CD8-positive, alpha-beta memory T cell (primary cell): ENCODE measurements at regions of chr17 and their contacts with region 1.

Region 1: DNA sequence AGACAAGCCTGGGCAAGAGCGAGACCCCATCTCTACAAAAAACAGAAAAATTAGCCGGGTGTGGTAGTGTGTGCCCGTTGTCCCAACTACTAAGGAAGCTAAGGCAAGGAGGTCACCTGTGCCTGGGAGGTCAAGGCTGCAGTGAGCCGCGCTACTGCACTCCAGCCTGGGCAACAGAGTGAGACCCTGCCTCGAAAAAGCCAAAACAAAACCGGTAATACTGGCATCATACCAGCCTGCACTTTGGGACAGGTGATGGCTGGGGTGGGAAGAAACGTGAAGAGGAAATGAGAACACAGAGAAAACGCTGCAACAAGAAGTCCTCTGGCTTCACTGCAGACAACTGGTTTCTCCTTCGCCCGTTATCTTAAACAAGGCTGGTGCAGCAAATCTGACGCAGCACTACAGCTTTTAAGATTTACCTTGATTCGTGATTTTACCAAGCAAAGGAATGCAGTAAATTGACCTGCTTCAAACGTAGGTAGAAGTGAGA is 725 bp upstream of the CASC3 start:
- DNase-seq: no peak
- H3K4me3 ChIP-seq: peak overlapping the region; percentile 82
- H3K4me3 Mint-ChIP-seq: peak overlapping the region; percentile 90 to 95 (median 95)
- H3K27ac ChIP-seq: peak overlapping the region; percentile 95
- H3K27ac Mint-ChIP-seq: peak overlapping the region; percentile 97 to 100 (median 98)
- H3K4me1 ChIP-seq: peaks cover 26% of the 10 kb centered on the region
- H3K4me1 Mint-ChIP-seq: peaks cover 29 to 50% (median 37%) of the 10 kb centered on the region in 3 donors
- H3K27me3 ChIP-seq: no peaks in the 10 kb centered on the region
- H3K27me3 Mint-ChIP-seq: peaks cover 0 to 6% of the 10 kb centered on the region in 2 donors

Region 2: DNA sequence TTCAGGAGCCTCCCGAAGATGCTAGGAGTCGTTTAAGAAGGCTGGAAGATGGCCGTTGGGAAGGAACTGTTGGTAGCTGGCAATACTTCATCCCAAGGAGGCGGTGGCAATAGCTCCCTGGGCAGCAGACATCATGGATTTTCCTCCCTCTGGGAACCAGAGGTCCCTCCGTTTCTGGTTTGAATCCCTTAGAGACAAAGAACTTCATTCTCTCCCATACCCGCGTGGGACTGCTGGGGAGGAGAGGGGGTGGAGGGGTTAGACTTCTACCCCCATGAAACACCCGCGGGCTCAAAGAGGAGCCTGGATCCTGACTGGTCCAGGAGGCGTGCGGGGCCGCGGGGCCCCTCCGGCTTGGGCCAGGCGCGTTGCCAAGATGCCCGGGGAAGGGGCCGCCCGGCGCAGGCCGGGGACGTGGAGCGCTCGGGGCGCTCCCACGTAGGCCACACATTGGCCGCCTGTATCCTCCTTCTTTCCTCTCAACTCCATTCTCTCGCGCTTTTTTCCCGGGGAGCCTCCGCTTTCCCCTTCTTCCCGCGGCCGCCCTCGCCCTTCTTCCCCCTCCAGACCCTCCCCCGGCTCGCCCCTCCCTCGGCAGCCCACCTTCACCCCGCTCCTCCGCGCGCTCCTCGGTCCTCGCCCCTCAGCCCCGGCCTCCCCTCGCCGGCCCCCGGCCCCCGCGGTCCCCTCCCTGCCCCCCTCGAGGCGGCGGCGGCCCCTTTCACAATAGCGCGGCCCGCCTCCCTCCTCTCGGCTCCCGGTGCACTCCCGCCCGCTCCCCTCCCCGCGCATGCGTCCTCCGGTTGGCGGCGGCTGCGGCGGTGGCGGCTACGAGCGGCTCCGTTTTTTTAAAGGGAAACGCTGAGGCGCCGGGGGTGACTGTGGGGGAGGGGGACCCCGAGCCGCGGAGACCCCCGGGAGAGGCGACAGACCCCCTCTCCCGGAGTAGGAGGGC is 18.2 kb before region 1 on chr17 and contains the start of gene MSL1:
- CTCF ChIA-PET with region 1: interaction called, 8 read pairs
- POLR2A ChIA-PET with region 1: interaction called, 68 read pairs
- DNase-seq: peak; percentile 84 to 90 (median 85)
- H3K4me3 ChIP-seq: peak within 1 kb of the TSS; percentile 93
- H3K4me3 Mint-ChIP-seq: peak within 1 kb of the TSS; percentile 83 to 96 (median 90)
- H3K27ac ChIP-seq: peak within 1 kb of the TSS; percentile 40
- H3K27ac Mint-ChIP-seq: peak within 1 kb of the TSS; percentile 74 to 96 (median 89)
- H3K4me1 ChIP-seq: peaks cover 32% of the 10 kb centered on the region
- H3K4me1 Mint-ChIP-seq: peaks cover 32 to 49% (median 36%) of the 10 kb centered on the region in 3 donors
- H3K27me3 ChIP-seq: no peaks in the 10 kb centered on the region
- H3K27me3 Mint-ChIP-seq: peaks cover 0 to 1% of the 10 kb centered on the region in 2 donors
- total RNA-seq, gene MSL1: 88.6 to 91.5 TPM

Region 3: DNA sequence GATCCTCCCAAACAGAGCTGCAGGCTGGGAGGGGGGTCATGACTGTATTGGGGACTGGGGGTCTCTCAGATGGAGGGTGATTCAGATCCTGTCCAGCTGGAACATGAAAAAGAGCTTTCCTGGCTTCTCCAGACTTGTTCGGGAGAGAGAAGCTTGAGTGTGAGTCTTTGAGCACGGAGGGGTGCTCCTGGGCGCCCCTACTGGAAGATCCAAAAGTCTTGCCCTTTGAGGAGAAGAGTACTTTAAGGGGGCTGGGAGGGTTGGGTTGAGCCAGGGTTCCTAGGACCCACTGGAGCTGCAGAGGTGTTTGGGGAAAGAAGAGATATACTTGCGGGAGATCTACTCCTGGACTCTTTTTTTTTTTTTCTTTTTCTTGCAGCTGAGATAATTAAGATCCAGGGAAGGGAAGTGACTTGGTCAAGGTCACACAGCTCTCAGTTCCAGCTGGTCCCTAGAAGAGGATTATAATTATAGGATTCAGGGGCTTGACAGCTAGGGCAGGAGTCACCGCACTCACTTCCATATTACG is 177.8 kb after region 1 on chr17:
- CTCF ChIA-PET with region 1: no interaction called
- POLR2A ChIA-PET with region 1: no interaction called
- DNase-seq: peak in 4 of 5 donors; percentile 34 to 65 (median 42)
- H3K4me3 ChIP-seq: peak overlapping the region; percentile 92
- H3K4me3 Mint-ChIP-seq: peak overlapping the region; percentile 86 to 98 (median 98)
- H3K27ac ChIP-seq: peak overlapping the region; percentile 84
- H3K27ac Mint-ChIP-seq: peak overlapping the region; percentile 93 to 100 (median 100)
- H3K4me1 ChIP-seq: peaks cover 67% of the 10 kb centered on the region
- H3K4me1 Mint-ChIP-seq: peaks cover 50 to 83% (median 82%) of the 10 kb centered on the region in 3 donors
- H3K27me3 ChIP-seq: no peaks in the 10 kb centered on the region
- H3K27me3 Mint-ChIP-seq: no peaks in the 10 kb centered on the region